ENCODE measurements at regions of chr1 and their contacts with region 1.

Region 1: DNA sequence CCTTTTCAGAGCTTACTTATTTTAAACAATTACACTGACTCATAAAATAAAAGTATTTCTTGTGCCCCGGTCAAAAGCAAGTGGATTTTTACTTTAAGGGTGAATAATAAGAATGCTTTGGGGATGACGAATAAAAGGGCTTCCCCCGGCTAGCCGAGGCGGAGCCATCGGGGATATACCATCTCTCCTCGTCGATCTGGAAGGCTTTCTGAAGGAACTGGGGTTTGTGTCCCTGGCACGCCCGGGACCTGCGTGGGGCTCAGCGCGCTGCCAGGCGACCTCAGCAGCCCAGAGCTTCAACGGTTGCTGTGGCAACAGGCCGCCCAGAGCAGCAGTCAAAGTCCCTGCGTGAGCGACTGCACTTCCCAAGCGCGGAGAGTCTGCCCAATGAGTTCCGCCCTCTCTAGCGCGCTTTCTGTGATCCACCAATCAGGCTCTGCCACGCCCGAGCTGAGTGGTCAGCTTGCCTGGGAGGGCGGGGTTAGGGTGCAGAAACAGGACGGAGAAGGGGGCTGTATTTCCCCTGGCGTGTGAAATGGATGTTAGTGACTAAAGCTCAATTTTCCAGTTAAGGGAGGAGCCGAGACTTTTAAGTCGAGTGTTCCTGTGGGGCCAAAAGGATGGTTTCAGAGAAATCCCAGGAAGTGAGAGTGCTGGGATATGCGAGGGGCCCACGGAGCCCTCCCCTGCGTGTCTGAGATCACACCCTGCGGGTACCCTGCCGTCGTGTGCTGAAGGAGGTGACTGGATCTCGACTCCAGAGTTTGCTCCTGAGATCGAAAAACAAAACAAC is 33.0 kb upstream of the MGST3 start:
- DNase-seq: peak; percentile 98 to 99 (median 98)
- ATAC-seq: peak; percentile 99
- H3K4me3 ChIP-seq: peak overlapping the region; percentile 47
- H3K27ac ChIP-seq: peak overlapping the region; percentile 67
- H3K4me1 ChIP-seq: peaks cover 3 to 9% of the 10 kb centered on the region in 2 experiments; a peak in 4 of 5 replicates
- H3K27me3 ChIP-seq: 0 out of 5 replicates have a peak, but pooled peaks cover 0 to 4% of the 10 kb centered on the region in 2 experiments
- CTCF ChIP-seq: 0 out of 6 replicates have a peak, but pooled peaks of 1 of the 3 experiments have one; percentile 1
- EP300 ChIP-seq: peak; percentile 6; the same call in 1 of the 2 replicates
- POLR2A ChIP-seq: peak; percentile 67
- RAD21 ChIP-seq: no peak

Region 2: GRCh38 chr1:165144757-165145397 is 453.2 kb before region 1 on chr1:
- CTCF ChIA-PET with region 1: no interaction called
- POLR2A ChIA-PET with region 1: no interaction called
- in situ Hi-C with region 1: loop called (anchors 25 kb)
- intact Hi-C with region 1: loop called (anchors 2 kb)
- DNase-seq: peak; percentile 41 to 63 (median 58)
- ATAC-seq: peak; percentile 93
- H3K4me3 ChIP-seq: no peak overlapping the region
- H3K27ac ChIP-seq: no peak overlapping the region
- H3K4me1 ChIP-seq: no peaks in the 10 kb centered on the region
- H3K27me3 ChIP-seq: no peaks in the 10 kb centered on the region; a peak in 1 of 5 replicates
- CTCF ChIP-seq: peak; percentile 61 to 79 (median 77)
- EP300 ChIP-seq: no peak
- POLR2A ChIP-seq: no peak
- RAD21 ChIP-seq: peak; percentile 58 to 67

Region 3: DNA sequence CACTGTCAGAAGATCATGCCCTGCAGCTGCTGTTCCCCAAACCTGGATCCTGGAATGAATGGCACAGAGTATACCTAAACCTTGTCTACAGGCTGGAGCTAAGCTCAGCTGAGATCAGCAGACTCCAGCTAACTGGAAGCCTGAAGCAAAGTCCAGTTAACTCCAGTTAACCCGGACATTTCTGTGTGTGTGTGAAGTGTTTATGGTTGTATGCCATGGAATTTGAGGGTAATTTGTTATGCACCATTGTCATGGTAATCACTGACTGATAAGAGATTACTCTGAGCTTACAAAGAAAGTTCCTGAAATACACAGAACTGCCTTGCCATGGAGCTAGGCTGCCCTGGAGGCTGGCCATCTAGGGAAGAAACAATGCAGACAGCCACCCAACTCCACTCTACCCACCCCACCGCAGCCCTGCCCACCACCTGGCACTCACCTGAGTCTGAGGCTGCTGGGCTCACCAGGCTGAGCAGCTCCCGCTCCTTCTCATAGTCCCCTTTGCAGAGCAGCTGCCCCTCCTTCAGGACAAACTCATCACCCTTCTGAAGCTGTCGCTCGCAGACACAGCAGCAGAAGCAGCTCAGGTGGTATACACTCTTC is 349.0 kb before region 1 on chr1:
- CTCF ChIA-PET with region 1: no interaction called
- POLR2A ChIA-PET with region 1: no interaction called
- in situ Hi-C with region 1: no loop called
- intact Hi-C with region 1: no loop called
- DNase-seq: no peak
- ATAC-seq: no peak
- H3K4me3 ChIP-seq: no peak overlapping the region
- H3K27ac ChIP-seq: no peak overlapping the region
- H3K4me1 ChIP-seq: no peaks in the 10 kb centered on the region
- H3K27me3 ChIP-seq: no peaks in the 10 kb centered on the region
- CTCF ChIP-seq: no peak
- EP300 ChIP-seq: no peak
- POLR2A ChIP-seq: no peak
- RAD21 ChIP-seq: no peak

Region 4: GRCh38 chr1:165355977-165356811 is 241.9 kb before region 1 on chr1 and contains the start of gene LMX1A:
- CTCF ChIA-PET with region 1: no interaction called
- POLR2A ChIA-PET with region 1: no interaction called
- in situ Hi-C with region 1: no loop called
- intact Hi-C with region 1: no loop called
- DNase-seq: no peak
- ATAC-seq: no peak; the same call in 2 of the 3 replicates
- H3K4me3 ChIP-seq: no peak within 1 kb of the TSS
- H3K27ac ChIP-seq: no peak within 1 kb of the TSS
- H3K4me1 ChIP-seq: peaks cover 0 to 8% of the 10 kb centered on the region in 2 experiments; a peak in 1 of 5 replicates
- H3K27me3 ChIP-seq: peaks cover 41 to 61% of the 10 kb centered on the region in 2 experiments
- CTCF ChIP-seq: no peak
- EP300 ChIP-seq: no peak
- POLR2A ChIP-seq: no peak
- RAD21 ChIP-seq: no peak
- polyA plus RNA-seq, gene LMX1A: not detected

Region 5: GRCh38 chr1:165392634-165393571 is 205.2 kb before region 1 on chr1:
- CTCF ChIA-PET with region 1: interaction called, 27 read pairs
- POLR2A ChIA-PET with region 1: interaction called, 4 read pairs
- in situ Hi-C with region 1: loop called (anchors 5 kb)
- intact Hi-C with region 1: loop called (anchors 1 kb)
- DNase-seq: peak; percentile 90 to 98 (median 94)
- ATAC-seq: peak; percentile 100
- H3K4me3 ChIP-seq: no peak overlapping the region
- H3K27ac ChIP-seq: no peak overlapping the region
- H3K4me1 ChIP-seq: peaks cover 5 to 7% of the 10 kb centered on the region in 2 experiments; a peak in 3 of 5 replicates
- H3K27me3 ChIP-seq: peaks cover 0 to 4% of the 10 kb centered on the region in 2 experiments; a peak in 1 of 5 replicates
- CTCF ChIP-seq: peak; percentile 91 to 98 (median 96)
- EP300 ChIP-seq: 0 out of 2 replicates have a peak, but pooled peaks have one; percentile 39
- POLR2A ChIP-seq: no peak
- RAD21 ChIP-seq: peak; percentile 92 to 97

Region 6: GRCh38 chr1:165630629-165631341 is 32.7 kb after region 1 on chr1 and contains the start of gene MGST3:
- CTCF ChIA-PET with region 1: no interaction called
- POLR2A ChIA-PET with region 1: no interaction called
- in situ Hi-C with region 1: no loop called
- intact Hi-C with region 1: loop called (anchors 2 kb)
- DNase-seq: peak; percentile 95 to 99 (median 98)
- ATAC-seq: peak; percentile 94
- H3K4me3 ChIP-seq: peak within 1 kb of the TSS; percentile 74
- H3K27ac ChIP-seq: peak within 1 kb of the TSS; percentile 98
- H3K4me1 ChIP-seq: peaks cover 13 to 35% of the 10 kb centered on the region in 2 experiments; a peak in 4 of 5 replicates
- H3K27me3 ChIP-seq: no peaks in the 10 kb centered on the region
- CTCF ChIP-seq: no peak; a peak in 1 of 6 replicates
- EP300 ChIP-seq: no peak
- POLR2A ChIP-seq: peak; percentile 95
- RAD21 ChIP-seq: no peak
- polyA plus RNA-seq, gene MGST3: 255 to 287 TPM

Region 7: GRCh38 chr1:165645654-165646366 is 47.7 kb after region 1 on chr1:
- CTCF ChIA-PET with region 1: no interaction called
- POLR2A ChIA-PET with region 1: no interaction called
- in situ Hi-C with region 1: no loop called
- intact Hi-C with region 1: no loop called
- DNase-seq: peak; percentile 31 to 65 (median 47)
- ATAC-seq: peak; percentile 80
- H3K4me3 ChIP-seq: no peak overlapping the region
- H3K27ac ChIP-seq: no peak overlapping the region
- H3K4me1 ChIP-seq: peaks cover 10 to 15% of the 10 kb centered on the region in 2 experiments; a peak in 3 of 5 replicates
- H3K27me3 ChIP-seq: no peaks in the 10 kb centered on the region
- CTCF ChIP-seq: no peak
- EP300 ChIP-seq: no peak
- POLR2A ChIP-seq: no peak
- RAD21 ChIP-seq: no peak

Region 8: DNA sequence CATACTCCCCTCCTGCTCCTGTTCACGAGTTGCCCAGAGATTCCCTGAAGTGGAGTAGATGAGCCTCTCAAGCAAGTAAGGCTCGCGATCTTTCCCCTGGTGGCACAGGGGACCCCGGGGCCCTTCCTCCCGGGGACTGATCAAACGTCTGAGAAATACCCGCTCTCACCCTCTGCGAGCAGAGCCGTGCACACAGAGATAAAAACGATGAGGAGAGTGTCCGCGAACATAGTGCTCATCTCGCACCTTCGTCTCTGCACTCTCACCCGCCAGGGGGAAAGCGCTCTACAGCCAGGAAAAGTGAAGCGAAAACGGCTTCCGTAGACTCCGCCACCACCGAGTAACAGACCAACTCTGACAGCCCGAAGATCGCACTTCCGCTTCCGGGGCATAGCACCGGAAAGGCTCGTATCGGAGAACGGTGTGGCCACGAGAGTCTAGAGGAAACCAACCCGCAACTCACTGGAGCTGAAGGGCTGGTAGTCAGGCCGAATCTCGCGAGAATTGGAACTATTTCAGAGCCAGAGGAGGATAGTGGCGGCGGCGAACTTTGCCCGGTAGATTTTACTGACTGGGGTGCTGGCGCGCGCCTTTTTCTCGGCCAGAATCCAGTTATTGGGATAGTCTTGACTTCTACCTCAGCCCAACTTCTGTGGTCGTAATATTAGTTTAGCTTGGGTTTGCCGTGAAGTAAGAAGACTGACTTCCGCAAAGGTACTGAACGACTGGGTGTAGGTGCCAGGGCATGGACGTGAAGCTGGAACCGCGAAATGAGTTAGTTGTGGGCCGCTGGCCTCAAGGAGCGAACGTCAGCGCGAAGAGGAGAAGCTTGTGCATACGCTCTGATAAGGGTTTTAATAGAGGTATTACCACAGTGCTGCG is 170.7 kb after region 1 on chr1 and contains the start of gene TMCO1:
- CTCF ChIA-PET with region 1: no interaction called
- POLR2A ChIA-PET with region 1: no interaction called
- in situ Hi-C with region 1: no loop called
- intact Hi-C with region 1: loop called (anchors 5 kb)
- DNase-seq: peak; percentile 90 to 99 (median 95)
- ATAC-seq: peak; percentile 96
- H3K4me3 ChIP-seq: peak within 1 kb of the TSS; percentile 73
- H3K27ac ChIP-seq: peak within 1 kb of the TSS; percentile 96
- H3K4me1 ChIP-seq: peaks cover 21 to 44% of the 10 kb centered on the region in 2 experiments
- H3K27me3 ChIP-seq: no peaks in the 10 kb centered on the region
- CTCF ChIP-seq: peak; percentile 27 to 45 (median 35); a peak in 4 of 6 replicates
- EP300 ChIP-seq: peak; percentile 62
- POLR2A ChIP-seq: peak; percentile 98
- RAD21 ChIP-seq: peak in 1 of 2 experiments; percentile 24; a peak in 1 of 4 replicates
- polyA plus RNA-seq, gene TMCO1: 412 to 561 TPM